ENCODE measurements at regions of chr19 and their contacts with region 1.

Region 1: DNA sequence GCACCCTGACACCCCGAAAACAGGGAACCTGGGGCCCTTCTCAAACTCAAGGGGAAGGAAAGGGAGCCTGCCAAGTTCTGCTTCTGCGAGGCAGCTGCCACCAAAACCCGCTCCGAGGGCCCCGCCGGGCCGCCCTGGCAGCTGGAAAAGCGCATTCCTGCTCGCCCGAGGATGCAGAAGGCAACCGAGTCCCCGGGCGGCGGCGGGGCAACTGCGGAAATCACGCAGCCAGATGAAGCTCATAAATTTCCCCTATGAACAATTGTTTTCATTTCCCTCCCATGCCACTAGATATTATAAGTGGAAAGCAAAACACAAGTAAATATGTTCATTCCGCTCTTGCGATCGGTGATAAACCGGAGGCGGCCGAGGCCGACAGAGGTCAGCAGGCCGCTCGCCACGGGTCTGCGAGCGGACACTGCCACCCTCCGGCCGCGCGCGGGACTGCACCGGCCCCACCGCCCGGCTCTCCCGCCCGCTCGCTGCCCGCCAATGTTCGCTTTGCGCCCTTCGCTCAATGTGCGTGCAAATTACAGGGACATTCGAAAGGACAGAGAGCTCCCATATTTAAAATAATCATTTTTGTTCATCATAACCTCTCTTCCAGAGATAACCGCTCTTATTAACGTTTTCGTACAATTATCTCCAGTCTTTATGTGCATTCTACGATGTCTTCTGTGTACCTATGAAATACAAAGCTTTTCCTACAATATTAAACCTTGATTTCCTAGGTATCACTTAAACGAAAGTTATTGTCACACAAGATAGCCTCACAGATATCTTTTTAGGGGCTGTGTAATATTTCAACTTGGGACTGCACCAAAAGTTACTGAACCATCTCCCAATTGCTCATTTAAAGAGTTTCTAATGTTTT is 120.8 kb upstream of the ZNF507 start:
- DNase-seq: peak; percentile 89
- H3K4me3 Mint-ChIP-seq: peak overlapping the region; percentile 75
- H3K27ac Mint-ChIP-seq: no peak overlapping the region
- H3K4me1 Mint-ChIP-seq: peaks cover 7% of the 10 kb centered on the region
- H3K27me3 Mint-ChIP-seq: peaks cover 28% of the 10 kb centered on the region

Region 2: GRCh38 chr19:30669329-30670010 is 1555.1 kb before region 1 on chr19:
- intact Hi-C with region 1: loop called (anchors 5 kb)
- DNase-seq: peak; percentile 83
- H3K4me3 Mint-ChIP-seq: no peak overlapping the region
- H3K27ac Mint-ChIP-seq: no peak overlapping the region
- H3K4me1 Mint-ChIP-seq: peaks cover 2% of the 10 kb centered on the region
- H3K27me3 Mint-ChIP-seq: peaks cover 2% of the 10 kb centered on the region

Region 3: GRCh38 chr19:30784850-30785457 is 1439.7 kb before region 1 on chr19:
- intact Hi-C with region 1: loop called (anchors 2 kb)
- DNase-seq: peak; percentile 87
- H3K4me3 Mint-ChIP-seq: no peak overlapping the region
- H3K27ac Mint-ChIP-seq: no peak overlapping the region
- H3K4me1 Mint-ChIP-seq: peaks cover 2% of the 10 kb centered on the region
- H3K27me3 Mint-ChIP-seq: no peaks in the 10 kb centered on the region

Measured in activated CD4-positive, alpha-beta T cell treated with anti-CD3 and anti-CD28 coated beads, Interleukin-2, amount 10 ng/mL, durations not matched to agents 24 days and 14 days (primary cell).